CD14-positive monocyte (primary cell): ENCODE measurements at regions of chrX and their contacts with region 1.

Region 1: DNA sequence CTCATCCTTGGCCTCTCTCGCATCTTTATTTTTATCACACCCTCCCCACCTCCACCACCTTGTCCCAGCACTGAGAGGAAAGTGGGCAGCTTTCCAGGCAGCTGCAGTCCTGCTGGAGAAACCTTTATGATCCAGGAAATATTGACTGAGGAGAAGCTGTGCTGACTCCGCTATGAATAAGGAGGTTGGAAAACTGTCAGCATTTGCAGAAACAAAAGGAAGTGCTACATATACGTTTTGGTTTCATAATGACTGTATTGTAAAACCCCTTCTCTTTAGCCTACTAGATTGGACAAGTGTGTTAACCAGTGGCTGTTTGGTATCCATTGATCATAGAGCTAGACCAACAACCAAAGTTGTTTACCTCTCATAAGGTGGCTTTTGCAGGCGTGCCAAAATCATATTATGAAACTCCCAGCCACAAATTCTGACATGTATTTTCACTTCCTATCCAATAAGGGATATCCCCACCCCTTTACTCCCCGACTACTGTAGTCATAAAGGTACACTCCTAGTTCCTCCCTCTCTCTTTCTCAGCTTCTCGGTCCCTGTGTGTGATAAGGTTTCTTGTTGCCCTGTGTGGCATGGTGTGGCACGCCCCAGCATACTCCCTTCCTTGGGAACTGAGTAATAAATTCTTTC is 88.4 kb downstream of the GPR143 start:
- DNase-seq: peak; percentile 39 to 74 (median 40)
- H3K4me3 ChIP-seq: peak overlapping the region in 2 of 3 experiments; percentile 22 to 53
- H3K4me3 Mint-ChIP-seq: peak overlapping the region; percentile 58 to 68
- H3K27ac ChIP-seq: peak overlapping the region; percentile 64 to 66
- H3K27ac Mint-ChIP-seq: peak overlapping the region; percentile 81 to 94 (median 87)
- H3K4me1 ChIP-seq: peaks cover 22 to 27% of the 10 kb centered on the region in 2 donors
- H3K4me1 Mint-ChIP-seq: peaks cover 31% of the 10 kb centered on the region
- H3K27me3 ChIP-seq: no peaks in the 10 kb centered on the region
- H3K27me3 Mint-ChIP-seq: peaks cover 0 to 14% (median 0%) of the 10 kb centered on the region in 3 donors
- CTCF ChIP-seq: no peak

Region 2: GRCh38 chrX:9464435-9465371 is 212.5 kb before region 1 on chrX and contains the start of gene TBL1X:
- intact Hi-C with region 1: loop called in 1 of 2 experiments (anchors 10 kb)
- DNase-seq: peak in 1 of 3 donors; percentile 11
- H3K4me3 ChIP-seq: peak within 1 kb of the TSS; percentile 82 to 84 (median 83)
- H3K4me3 Mint-ChIP-seq: peak within 1 kb of the TSS; percentile 79 to 87
- H3K27ac ChIP-seq: peak within 1 kb of the TSS; percentile 65 to 79
- H3K27ac Mint-ChIP-seq: peak within 1 kb of the TSS; percentile 85 to 96 (median 90)
- H3K4me1 ChIP-seq: peaks cover 38 to 64% of the 10 kb centered on the region in 2 donors
- H3K4me1 Mint-ChIP-seq: peaks cover 45% of the 10 kb centered on the region
- H3K27me3 ChIP-seq: peaks cover 0 to 19% of the 10 kb centered on the region in 2 donors
- H3K27me3 Mint-ChIP-seq: peaks cover 1 to 42% (median 2%) of the 10 kb centered on the region in 3 donors
- CTCF ChIP-seq: no peak
- polyA plus RNA-seq, gene TBL1X: 12.5 to 19.5 (median 13.8) TPM

Region 3: GRCh38 chrX:9595131-9595530 is 82.1 kb before region 1 on chrX:
- intact Hi-C with region 1: no loop called
- DNase-seq: no peak
- H3K4me3 ChIP-seq: no peak overlapping the region
- H3K4me3 Mint-ChIP-seq: no peak overlapping the region
- H3K27ac ChIP-seq: no peak overlapping the region
- H3K27ac Mint-ChIP-seq: peak overlapping the region in 1 of 7 donors; percentile 5
- H3K4me1 ChIP-seq: peaks cover 7 to 8% of the 10 kb centered on the region in 2 donors
- H3K4me1 Mint-ChIP-seq: peaks cover 16% of the 10 kb centered on the region
- H3K27me3 ChIP-seq: peaks cover 0 to 3% of the 10 kb centered on the region in 2 donors
- H3K27me3 Mint-ChIP-seq: peaks cover 0 to 3% (median 0%) of the 10 kb centered on the region in 3 donors
- CTCF ChIP-seq: no peak

Region 4: DNA sequence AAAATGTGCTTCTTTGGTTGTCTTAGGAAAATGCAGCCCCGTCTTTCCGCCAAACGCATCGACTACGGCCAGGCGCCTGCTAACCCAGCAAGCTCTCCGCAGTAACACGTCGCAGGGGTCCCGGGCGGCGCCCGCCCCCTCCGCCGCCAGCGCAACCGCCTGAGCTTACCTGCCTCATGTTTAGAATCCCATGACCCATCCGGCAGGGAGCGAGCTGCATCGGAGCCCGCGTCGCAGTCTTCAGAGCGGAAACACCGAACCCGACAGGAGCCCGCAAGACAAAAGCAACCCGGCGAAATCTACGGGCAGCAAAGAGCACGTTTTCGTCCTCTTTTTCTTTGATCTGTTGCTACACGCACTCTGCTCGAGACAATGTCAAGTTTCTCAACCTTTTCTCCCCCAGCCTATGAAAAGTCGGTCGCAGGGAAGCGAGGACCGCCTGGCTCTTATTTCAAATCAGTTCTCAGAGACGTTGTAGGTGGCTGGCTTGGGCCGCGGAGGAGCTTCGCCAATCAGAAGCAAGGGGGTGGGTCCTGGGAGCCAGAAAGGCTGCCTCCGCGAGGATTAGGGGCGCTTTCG is 943.0 kb after region 1 on chrX and contains the start of gene MID1:
- intact Hi-C with region 1: no loop called
- DNase-seq: peak in 1 of 3 donors; percentile 0
- H3K4me3 ChIP-seq: peak within 1 kb of the TSS; percentile 10 to 60 (median 34)
- H3K4me3 Mint-ChIP-seq: peak within 1 kb of the TSS; percentile 72 to 94
- H3K27ac ChIP-seq: no peak within 1 kb of the TSS
- H3K27ac Mint-ChIP-seq: peak within 1 kb of the TSS in 1 of 7 donors; percentile 50
- H3K4me1 ChIP-seq: peaks cover 7 to 13% of the 10 kb centered on the region in 2 donors
- H3K4me1 Mint-ChIP-seq: peaks cover 19% of the 10 kb centered on the region
- H3K27me3 ChIP-seq: peaks cover 57 to 65% of the 10 kb centered on the region in 2 donors
- H3K27me3 Mint-ChIP-seq: peaks cover 38 to 57% (median 56%) of the 10 kb centered on the region in 3 donors
- CTCF ChIP-seq: no peak
- polyA plus RNA-seq, gene MID1: 0.05 to 0.10 TPM in 2 of 3 donors, not detected in the other